HEK293 (cell line): ENCODE measurements at regions of chr10 and their contacts with region 1.

Region 1: DNA sequence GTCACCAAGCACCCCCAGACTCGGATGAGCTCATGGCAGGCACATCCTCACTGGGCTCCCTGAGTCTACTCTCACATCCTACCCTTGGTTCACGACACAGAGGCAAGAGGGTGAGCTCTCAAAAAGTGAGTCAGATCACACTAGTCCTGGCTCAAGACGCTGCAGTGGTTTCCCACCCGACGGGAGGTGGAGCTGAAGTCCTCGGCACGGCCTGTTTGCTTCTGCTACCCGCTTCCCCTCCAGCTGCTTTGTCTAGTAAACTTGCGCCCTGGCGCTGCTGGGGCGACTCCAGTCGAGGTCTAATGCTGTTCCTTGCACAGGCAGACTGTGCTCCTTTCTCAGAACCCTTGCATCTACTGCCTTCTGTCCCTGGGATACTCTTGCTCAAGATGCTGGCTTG is 13.5 kb upstream of the SFMBT2 start:
- H3K4me3 ChIP-seq: no peak overlapping the region
- H3K27ac ChIP-seq: no peak overlapping the region
- H3K4me1 ChIP-seq: peaks cover 5% of the 10 kb centered on the region; the same call in 1 of the 2 replicates
- CTCF ChIP-seq: no peak

Region 2: DNA sequence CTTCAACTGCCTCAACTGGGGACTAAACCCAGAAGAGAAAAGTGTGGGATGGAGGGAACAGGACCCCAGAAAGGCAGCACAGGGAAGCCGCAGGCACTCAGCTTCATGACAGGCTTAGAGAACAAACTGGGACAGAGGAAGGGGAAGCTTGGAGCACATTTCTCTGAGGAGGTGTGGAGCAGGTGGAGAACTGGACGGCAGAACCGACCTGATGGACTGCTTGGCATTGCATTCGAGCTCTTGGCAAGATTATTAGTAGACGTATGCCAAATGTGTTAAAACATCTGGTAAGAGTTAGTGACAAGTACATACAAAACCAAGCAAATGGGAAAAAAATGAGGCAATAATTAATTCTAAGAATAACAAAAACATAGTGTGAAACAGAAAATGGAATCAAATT is 349.2 kb before region 1 on chr10:
- CTCF ChIA-PET with region 1: no interaction called
- POLR2A ChIA-PET with region 1: no interaction called
- H3K4me3 ChIP-seq: no peak overlapping the region
- H3K27ac ChIP-seq: no peak overlapping the region
- H3K4me1 ChIP-seq: no peaks in the 10 kb centered on the region
- CTCF ChIP-seq: no peak

Region 3: DNA sequence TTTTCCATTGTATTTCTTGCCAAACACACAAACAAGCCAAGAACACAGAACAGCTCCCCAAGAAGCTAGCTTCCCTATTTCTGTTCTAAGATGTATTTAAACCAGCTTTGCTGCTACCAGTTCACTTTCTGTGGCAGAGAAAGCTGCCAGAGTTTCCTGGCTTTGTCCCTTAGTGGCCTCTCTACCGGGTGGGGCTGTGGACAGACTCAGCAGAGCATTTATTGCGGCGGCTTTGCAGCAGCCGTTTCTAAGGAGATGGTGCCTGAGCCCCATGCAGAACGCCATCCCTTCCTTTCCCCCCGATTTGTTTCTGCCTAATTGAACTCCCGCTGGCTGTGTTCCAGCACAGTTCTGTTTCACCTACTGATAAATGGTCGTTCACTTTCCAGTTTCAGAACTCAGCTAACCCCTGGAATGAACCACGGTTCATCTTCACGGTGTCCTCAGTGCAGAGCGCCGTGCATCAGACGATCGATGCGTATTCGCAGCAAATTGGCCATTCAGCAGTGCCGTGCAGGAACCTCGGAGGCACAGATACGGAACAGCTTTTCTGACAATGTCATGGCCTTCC is 20.3 kb after region 1 on chr10:
- CTCF ChIA-PET with region 1: no interaction called
- POLR2A ChIA-PET with region 1: no interaction called
- H3K4me3 ChIP-seq: no peak overlapping the region
- H3K27ac ChIP-seq: no peak overlapping the region
- H3K4me1 ChIP-seq: no peaks in the 10 kb centered on the region
- CTCF ChIP-seq: no peak

Region 4: DNA sequence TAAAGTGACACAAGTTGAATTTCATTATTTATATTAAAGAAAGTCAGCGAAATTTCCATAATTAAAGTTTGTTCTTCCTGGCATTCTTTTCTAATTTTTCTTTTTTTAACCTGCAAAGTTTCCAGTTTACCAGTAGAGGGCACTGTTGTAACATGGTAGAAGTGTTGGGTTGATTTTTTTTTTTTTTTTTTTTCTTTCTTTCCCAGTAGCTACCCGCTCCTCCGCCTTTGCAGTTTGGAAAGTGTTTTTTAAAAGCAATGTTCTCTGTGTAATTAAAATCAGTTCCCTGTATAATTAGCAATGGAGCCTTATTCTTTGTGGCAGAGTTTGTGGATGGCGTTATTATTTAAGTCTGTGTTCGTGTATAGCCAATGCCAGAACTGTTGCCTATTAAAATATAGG is 447.7 kb after region 1 on chr10:
- CTCF ChIA-PET with region 1: no interaction called
- POLR2A ChIA-PET with region 1: no interaction called
- H3K4me3 ChIP-seq: peak overlapping the region; percentile 33
- H3K27ac ChIP-seq: no peak overlapping the region
- H3K4me1 ChIP-seq: peaks cover 23% of the 10 kb centered on the region
- CTCF ChIP-seq: no peak; the same call in 1 of the 2 replicates

Region 5: GRCh38 chr10:7928536-7928935 is 504.2 kb after region 1 on chr10:
- CTCF ChIA-PET with region 1: no interaction called
- POLR2A ChIA-PET with region 1: interaction called, 10 read pairs
- H3K4me3 ChIP-seq: no peak overlapping the region
- H3K27ac ChIP-seq: no peak overlapping the region
- H3K4me1 ChIP-seq: peaks cover 5% of the 10 kb centered on the region; the same call in 1 of the 2 replicates
- CTCF ChIP-seq: no peak